ENCODE measurements at regions of chr1 and their contacts with region 1.

Region 1: GRCh38 chr1:235513495-235514366 is 9.5 kb upstream of the B3GALNT2 start:
- DNase-seq: no peak
- ATAC-seq: peak; percentile 47

Region 2: GRCh38 chr1:235783148-235783776 is 269.5 kb after region 1 on chr1:
- intact Hi-C with region 1: loop called (anchors 5 to 10 kb)
- DNase-seq: no peak
- ATAC-seq: no peak

Region 3: DNA sequence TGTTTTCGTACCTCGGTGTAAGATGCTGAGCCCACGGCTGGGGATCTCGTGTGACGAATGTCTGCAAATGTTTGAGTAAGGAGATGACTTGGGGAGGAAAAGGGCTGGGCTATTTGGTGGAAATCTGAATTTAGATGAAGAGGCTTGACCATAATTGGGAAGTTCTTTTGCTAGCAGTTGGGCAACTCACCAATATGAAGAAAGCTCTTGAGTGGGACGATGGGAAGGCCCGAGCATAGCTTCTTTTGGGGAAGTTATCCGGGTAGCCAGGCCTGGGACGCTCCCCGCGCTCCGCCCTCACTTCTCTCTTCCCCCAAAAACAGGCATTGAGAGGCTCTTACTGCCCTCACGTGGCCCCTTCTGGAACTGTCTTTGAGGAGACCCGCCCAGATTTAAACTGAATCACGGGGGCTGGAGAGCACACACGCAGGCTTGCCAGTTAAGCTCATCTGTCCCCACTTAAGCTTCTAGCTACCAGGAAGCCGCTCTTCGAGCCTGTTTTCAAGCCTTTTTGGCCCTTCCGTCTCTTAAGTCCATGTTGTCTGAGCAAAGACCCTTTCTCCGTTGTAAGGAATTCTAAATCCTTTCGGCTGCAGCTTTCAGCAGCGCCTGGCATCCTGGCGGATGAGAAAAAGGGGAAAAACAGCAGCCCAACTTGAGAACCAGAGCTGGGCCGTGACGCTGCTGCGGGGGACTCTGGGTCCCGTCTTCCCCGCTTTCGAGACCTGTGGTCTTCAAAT is 458.0 kb after region 1 on chr1:
- intact Hi-C with region 1: loop called in 1 of 2 experiments (anchors 5 kb)
- DNase-seq: peak; percentile 93
- ATAC-seq: peak; percentile 94 to 97

Measured in left cardiac atrium (tissue), 4 donors.